Activated T-helper 2 cell treated with anti-CD3 and anti-CD28 coated beads, Interferon-gamma antibody, Interleukin-2, Interleukin-4, amounts not matched to agents 10 μg/mL and 5 μg/mL and 100 μg/mL, durations not matched to agents 14 hours and 24 hours and 36 hours (primary cell): ENCODE measurements at regions of chr19 and their contacts with region 1.

Region 1: GRCh38 chr19:16566161-16566560 is 6.1 kb downstream of the SLC35E1 start:
- DNase-seq: peak; percentile 85
- H3K4me3 Mint-ChIP-seq: peak overlapping the region; percentile 74
- H3K27ac Mint-ChIP-seq: peak overlapping the region; percentile 98
- H3K4me1 Mint-ChIP-seq: peaks cover 35% of the 10 kb centered on the region
- H3K27me3 Mint-ChIP-seq: no peaks in the 10 kb centered on the region

Region 2: GRCh38 chr19:16088351-16089009 is 477.7 kb before region 1 on chr19:
- intact Hi-C with region 1: loop called (anchors 10 kb)
- DNase-seq: no peak
- H3K4me3 Mint-ChIP-seq: no peak overlapping the region
- H3K27ac Mint-ChIP-seq: peak overlapping the region; percentile 51
- H3K4me1 Mint-ChIP-seq: peaks cover 40% of the 10 kb centered on the region
- H3K27me3 Mint-ChIP-seq: no peaks in the 10 kb centered on the region

Region 3: DNA sequence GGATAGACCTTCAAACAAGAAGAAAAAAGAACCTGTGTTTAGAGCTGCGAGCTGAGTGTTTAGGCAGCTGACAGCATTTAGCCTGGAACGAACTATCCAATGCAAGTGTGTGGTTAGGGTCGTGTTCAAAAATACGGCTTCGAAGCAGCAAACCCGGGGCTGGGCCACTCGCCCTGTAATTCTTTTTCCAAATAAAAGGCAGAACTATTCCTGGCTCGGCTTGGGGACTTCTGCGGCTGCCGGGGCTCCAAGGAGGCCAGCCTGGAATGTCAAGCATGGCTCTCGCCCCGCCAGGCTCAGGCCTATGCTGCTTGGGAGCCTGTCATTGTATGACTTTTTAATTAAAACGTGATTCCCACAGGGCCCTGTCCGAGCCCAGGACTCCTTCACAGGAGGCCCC is 293.2 kb before region 1 on chr19:
- intact Hi-C with region 1: no loop called
- DNase-seq: no peak
- H3K4me3 Mint-ChIP-seq: no peak overlapping the region
- H3K27ac Mint-ChIP-seq: no peak overlapping the region
- H3K4me1 Mint-ChIP-seq: peaks cover 5% of the 10 kb centered on the region
- H3K27me3 Mint-ChIP-seq: peaks cover 31% of the 10 kb centered on the region

Region 4: GRCh38 chr19:16366433-16367260 is 199.5 kb before region 1 on chr19:
- intact Hi-C with region 1: no loop called
- DNase-seq: peak; percentile 45
- H3K4me3 Mint-ChIP-seq: peak overlapping the region; percentile 64
- H3K27ac Mint-ChIP-seq: peak overlapping the region; percentile 77
- H3K4me1 Mint-ChIP-seq: peaks cover 40% of the 10 kb centered on the region
- H3K27me3 Mint-ChIP-seq: peaks cover 6% of the 10 kb centered on the region

Region 5: DNA sequence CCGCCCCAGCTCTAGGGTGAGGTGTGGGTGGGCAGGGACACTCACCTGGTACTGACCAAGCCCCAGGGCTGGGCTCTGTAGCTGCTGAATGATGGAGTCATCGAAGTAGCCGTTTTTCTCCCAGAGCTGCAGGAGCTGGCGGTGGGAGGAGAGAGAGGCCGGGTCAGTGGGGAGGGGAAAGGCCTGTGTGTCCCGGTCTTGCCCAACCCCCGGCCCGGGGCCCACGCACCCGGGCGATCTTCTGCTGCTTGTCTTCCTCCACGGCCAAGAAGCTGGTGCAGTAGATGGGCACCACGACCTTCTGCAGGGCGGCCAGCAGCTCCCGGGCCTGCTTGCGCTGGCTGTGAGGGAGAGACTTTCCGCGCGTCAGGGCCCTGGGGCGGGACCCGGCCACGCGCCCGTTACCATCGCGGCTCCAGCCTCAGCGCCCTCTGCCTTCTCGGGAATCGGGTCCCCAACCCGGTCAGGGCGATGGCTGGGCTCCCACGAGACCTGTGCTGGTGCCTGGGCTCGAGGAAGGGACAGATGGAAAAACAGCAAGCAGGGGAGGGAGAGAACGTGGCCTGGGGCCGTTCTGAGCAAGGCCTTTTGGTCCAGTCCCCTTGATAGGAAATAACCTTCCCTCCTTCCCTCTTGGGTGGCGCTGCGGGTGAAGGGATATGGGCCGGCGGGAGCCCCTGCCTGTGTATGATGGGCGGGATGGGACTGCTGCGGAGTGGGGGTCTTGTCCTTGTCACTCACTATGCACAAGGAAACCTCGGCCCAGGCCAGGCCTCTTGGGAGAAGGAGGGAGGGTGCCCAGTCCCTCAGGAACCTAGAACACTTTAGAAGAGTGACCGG is 35.4 kb before region 1 on chr19:
- intact Hi-C with region 1: no loop called
- DNase-seq: no peak
- H3K4me3 Mint-ChIP-seq: no peak overlapping the region
- H3K27ac Mint-ChIP-seq: no peak overlapping the region
- H3K4me1 Mint-ChIP-seq: no peaks in the 10 kb centered on the region
- H3K27me3 Mint-ChIP-seq: no peaks in the 10 kb centered on the region

Region 6: DNA sequence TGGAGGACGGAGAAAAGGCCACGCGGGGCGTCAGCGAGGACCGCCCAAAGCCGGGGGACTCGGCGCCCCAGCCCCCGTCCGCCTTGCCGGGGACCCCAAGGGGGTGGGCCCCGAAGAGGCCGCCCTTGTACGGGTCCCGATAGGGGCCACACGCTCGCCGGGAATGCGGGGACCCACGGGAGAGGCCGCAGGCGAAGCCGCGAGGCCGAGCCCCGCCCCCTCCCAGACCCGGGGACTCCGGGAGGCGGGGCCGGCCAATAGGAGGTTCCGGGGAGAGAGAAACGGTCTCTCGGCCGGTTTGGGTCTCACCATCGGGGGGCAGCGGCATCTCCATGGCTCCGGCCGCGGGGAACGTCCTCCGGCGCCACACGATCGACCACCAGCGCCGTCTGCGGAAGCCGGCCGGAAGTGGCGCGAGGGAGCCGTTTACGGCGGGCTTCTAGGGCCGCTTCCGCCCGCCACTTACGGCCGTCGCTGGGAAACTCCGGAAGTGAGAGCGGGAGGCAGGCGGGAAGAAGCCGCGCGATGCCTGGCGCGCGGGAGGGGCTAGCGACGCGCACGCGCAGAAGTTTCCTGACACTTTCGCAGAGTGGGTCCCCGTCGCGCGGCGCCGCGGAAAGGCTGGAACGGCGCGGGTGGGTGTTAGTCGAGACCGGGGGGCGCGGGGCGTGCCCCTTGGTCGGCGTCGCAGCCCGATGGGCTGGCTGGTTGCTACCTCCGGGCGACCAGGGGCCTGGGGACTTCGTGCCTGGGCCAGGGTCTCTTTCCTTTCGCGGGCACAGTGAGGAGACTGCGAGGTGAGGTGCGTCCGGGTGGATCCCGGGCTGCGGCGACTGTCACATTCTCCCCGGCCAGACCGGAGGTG is 23.9 kb before region 1 on chr19 and contains the start of gene CHERP:
- intact Hi-C with region 1: loop called (anchors 2 kb)
- DNase-seq: peak; percentile 93
- H3K4me3 Mint-ChIP-seq: peak within 1 kb of the TSS; percentile 99
- H3K27ac Mint-ChIP-seq: peak within 1 kb of the TSS; percentile 95
- H3K4me1 Mint-ChIP-seq: peaks cover 28% of the 10 kb centered on the region
- H3K27me3 Mint-ChIP-seq: no peaks in the 10 kb centered on the region
- total RNA-seq, gene CHERP: 79.1 and 82.3 TPM in 2 replicates

Region 7: GRCh38 chr19:16584248-16585141 is 18.3 kb after region 1 on chr19:
- intact Hi-C with region 1: loop called (anchors 1 kb)
- DNase-seq: peak; percentile 88
- H3K4me3 Mint-ChIP-seq: peak overlapping the region; percentile 77
- H3K27ac Mint-ChIP-seq: peak overlapping the region; percentile 90
- H3K4me1 Mint-ChIP-seq: peaks cover 66% of the 10 kb centered on the region
- H3K27me3 Mint-ChIP-seq: no peaks in the 10 kb centered on the region